Motor neuron (in vitro differentiated cells): ENCODE measurements at regions of chr6 and their contacts with region 1.

Region 1: DNA sequence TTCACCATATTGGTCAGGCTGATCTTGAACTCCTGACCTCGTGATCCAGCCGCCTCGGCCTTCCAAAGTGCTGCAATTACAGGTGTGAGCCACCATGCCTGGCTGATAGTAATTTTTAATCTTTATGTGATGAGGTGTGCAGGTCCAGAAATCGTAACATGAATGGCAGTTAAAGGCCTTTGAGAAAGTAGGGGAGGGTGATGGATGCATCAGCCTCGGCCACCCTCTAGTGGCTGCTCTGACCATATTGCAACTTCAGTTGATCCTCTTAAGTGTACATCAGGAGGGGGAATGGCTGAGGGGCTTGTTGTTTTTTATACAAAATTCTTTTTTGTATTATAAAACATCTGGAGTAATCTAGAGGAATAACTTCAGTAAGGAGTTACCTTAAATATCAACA is 193.0 kb downstream of the ZFAND3 start:
- ATAC-seq: peak in 5 of 8 experiments; percentile 36 to 84 (median 55)
- H3K4me3 ChIP-seq: no peak overlapping the region
- H3K27ac ChIP-seq: peak overlapping the region in 1 of 2 donors; percentile 23
- H3K4me1 ChIP-seq: no peaks in the 10 kb centered on the region

Region 2: GRCh38 chr6:37705239-37706051 is 307.1 kb before region 1 on chr6:
- in situ Hi-C with region 1: loop called in 1 of 9 experiments (anchors 10 kb)
- ATAC-seq: peak; percentile 81 to 88 (median 84)
- H3K4me3 ChIP-seq: peak overlapping the region; percentile 22 to 32 (median 30)
- H3K27ac ChIP-seq: peak overlapping the region; percentile 79 to 82
- H3K4me1 ChIP-seq: peaks cover 24 to 30% of the 10 kb centered on the region in 2 donors